ENCODE measurements at regions of chr3 and their contacts with region 1.

Region 1: GRCh38 chr3:152205097-152205593 is 63.6 kb upstream of the MBNL1 start:
- DNase-seq: peak in 2 of 9 experiments; percentile 47 to 62
- ATAC-seq: peak; percentile 31
- H3K4me3 ChIP-seq: peak overlapping the region; percentile 44 to 53
- H3K4me3 Mint-ChIP-seq: peak overlapping the region; percentile 86
- H3K27ac ChIP-seq: peak overlapping the region; percentile 32 to 60
- H3K27ac Mint-ChIP-seq: peak overlapping the region; percentile 93
- H3K4me1 ChIP-seq: peaks cover 57% of the 10 kb centered on the region
- H3K4me1 Mint-ChIP-seq: peaks cover 73% of the 10 kb centered on the region
- H3K27me3 ChIP-seq: no peaks in the 10 kb centered on the region
- H3K27me3 Mint-ChIP-seq: no peaks in the 10 kb centered on the region
- CTCF ChIP-seq: no peak

Region 2: GRCh38 chr3:152193673-152194267 is 11.4 kb before region 1 on chr3:
- CTCF ChIA-PET with region 1: interaction called, 3 read pairs
- POLR2A ChIA-PET with region 1: interaction called, 7 read pairs
- intact Hi-C with region 1: loop called in 1 of 2 experiments (anchors 2 kb)
- DNase-seq: peak in 4 of 9 experiments; percentile 20 to 82 (median 51)
- ATAC-seq: peak; percentile 65
- H3K4me3 ChIP-seq: peak overlapping the region; percentile 54 to 59
- H3K4me3 Mint-ChIP-seq: peak overlapping the region; percentile 83
- H3K27ac ChIP-seq: peak overlapping the region; percentile 62 to 80
- H3K27ac Mint-ChIP-seq: peak overlapping the region; percentile 90
- H3K4me1 ChIP-seq: peaks cover 65% of the 10 kb centered on the region
- H3K4me1 Mint-ChIP-seq: peaks cover 76% of the 10 kb centered on the region
- H3K27me3 ChIP-seq: no peaks in the 10 kb centered on the region
- H3K27me3 Mint-ChIP-seq: no peaks in the 10 kb centered on the region
- CTCF ChIP-seq: no peak

Region 3: DNA sequence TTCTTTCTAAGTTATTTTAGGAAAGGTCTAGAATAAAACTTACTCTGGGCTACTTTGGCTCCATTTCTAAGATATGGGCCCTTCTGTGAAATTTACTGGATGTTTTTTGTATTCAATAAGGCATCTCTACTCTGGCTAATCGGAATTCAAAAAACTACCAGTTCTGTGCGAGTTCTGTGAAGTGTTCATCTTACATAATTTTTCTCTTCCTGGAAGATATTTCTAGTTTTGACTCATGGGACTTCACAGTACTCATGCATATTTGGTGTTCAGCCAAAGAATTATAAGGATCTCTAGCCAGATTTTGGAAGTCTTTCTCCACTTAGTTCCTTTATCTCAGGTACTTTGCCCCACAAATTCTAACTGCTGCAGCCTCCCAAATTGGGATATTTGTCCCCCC is 17.2 kb after region 1 on chr3:
- CTCF ChIA-PET with region 1: interaction called, 3 read pairs
- POLR2A ChIA-PET with region 1: interaction called, 5 read pairs
- intact Hi-C with region 1: loop called in 1 of 2 experiments (anchors 2 kb)
- DNase-seq: no peak
- ATAC-seq: no peak
- H3K4me3 ChIP-seq: no peak overlapping the region
- H3K4me3 Mint-ChIP-seq: peak overlapping the region; percentile 64
- H3K27ac ChIP-seq: no peak overlapping the region
- H3K27ac Mint-ChIP-seq: peak overlapping the region; percentile 79
- H3K4me1 ChIP-seq: peaks cover 29% of the 10 kb centered on the region
- H3K4me1 Mint-ChIP-seq: peaks cover 62% of the 10 kb centered on the region
- H3K27me3 ChIP-seq: no peaks in the 10 kb centered on the region
- H3K27me3 Mint-ChIP-seq: no peaks in the 10 kb centered on the region
- CTCF ChIP-seq: no peak

Region 4: GRCh38 chr3:152235709-152236298 is 30.7 kb after region 1 on chr3:
- CTCF ChIA-PET with region 1: no interaction called
- POLR2A ChIA-PET with region 1: no interaction called
- intact Hi-C with region 1: loop called in 1 of 2 experiments (anchors 5 kb)
- DNase-seq: no peak
- ATAC-seq: no peak
- H3K4me3 ChIP-seq: no peak overlapping the region
- H3K4me3 Mint-ChIP-seq: no peak overlapping the region
- H3K27ac ChIP-seq: no peak overlapping the region
- H3K27ac Mint-ChIP-seq: peak overlapping the region; percentile 69
- H3K4me1 ChIP-seq: peaks cover 70% of the 10 kb centered on the region
- H3K4me1 Mint-ChIP-seq: peaks cover 81% of the 10 kb centered on the region
- H3K27me3 ChIP-seq: no peaks in the 10 kb centered on the region
- H3K27me3 Mint-ChIP-seq: no peaks in the 10 kb centered on the region
- CTCF ChIP-seq: no peak

Measured in CD8-positive, alpha-beta T cell (primary cell).